Lower leg skin (tissue), 4 donors: ENCODE measurements at regions of chr12 and their contacts with region 1.

Region 1: DNA sequence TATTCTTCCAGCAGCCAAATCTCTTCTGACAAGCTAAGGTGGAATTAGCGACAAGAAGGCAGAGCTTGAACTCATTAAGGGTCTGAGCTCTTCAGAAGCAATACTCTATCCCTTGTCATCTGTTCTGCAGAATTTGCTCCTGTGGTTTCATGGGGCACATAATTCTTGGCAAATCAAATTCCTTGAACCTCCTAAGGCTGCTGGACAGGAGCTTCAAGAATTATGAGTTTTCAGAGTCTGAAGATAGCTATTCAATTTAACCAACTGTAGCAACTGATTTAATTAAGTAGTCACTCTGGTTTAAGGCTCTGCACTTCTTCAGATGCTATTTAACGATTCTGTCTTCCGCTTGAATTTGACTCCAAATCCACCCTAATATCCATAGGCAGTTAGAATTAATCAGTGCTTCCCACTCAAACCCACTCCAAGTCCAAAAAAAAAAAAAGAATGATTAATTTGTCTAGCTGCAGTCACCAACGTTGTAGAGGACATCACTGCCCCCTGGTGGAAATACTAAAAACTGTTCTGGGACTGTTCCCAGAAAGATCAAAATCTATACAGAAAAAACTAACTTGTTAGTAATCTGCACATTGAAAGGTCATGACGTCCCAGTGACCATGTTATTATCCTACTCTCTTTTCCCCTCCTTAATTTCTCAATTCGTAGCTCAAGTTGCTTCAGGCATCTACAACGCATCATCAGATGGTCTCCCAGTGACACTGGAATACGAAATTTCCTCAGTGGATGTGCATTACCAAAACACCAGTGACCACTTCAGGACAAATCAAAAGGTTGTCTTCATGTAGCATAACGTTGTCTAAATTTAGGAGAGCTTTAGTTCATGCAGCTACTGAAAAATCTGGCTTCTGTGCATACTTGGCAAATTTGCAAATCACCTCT is 169.8 kb downstream of the KIF21A start:
- DNase-seq: no peak
- H3K4me3 ChIP-seq: no peak overlapping the region
- CTCF ChIP-seq: no peak
- POLR2A ChIP-seq: no peak

Region 2: DNA sequence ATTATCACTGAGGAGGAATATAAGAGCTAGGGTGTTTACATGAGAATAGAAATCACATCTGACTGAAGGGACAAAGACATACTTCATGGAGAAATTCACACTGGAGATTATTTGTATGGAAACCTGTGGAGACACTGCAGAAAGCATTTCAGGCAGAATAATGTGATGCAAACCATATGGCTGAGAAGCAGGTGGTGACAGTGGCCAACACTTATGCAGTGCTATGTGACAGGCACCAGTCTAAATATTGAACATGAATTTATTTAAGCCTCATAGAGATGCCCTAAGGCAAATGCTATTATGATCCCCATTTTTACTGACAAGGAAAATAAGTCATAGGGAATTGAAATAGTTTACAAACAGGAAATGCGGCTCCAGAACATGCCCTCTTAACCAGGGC is 940.3 kb before region 1 on chr12:
- intact Hi-C with region 1: loop called (anchors 10 kb)
- DNase-seq: no peak
- H3K4me3 ChIP-seq: no peak overlapping the region
- CTCF ChIP-seq: no peak
- POLR2A ChIP-seq: no peak

Region 3: GRCh38 chr12:39354955-39355354 is 81.8 kb after region 1 on chr12:
- intact Hi-C with region 1: no loop called
- DNase-seq: no peak
- H3K4me3 ChIP-seq: no peak overlapping the region
- CTCF ChIP-seq: no peak
- POLR2A ChIP-seq: no peak

Region 4: DNA sequence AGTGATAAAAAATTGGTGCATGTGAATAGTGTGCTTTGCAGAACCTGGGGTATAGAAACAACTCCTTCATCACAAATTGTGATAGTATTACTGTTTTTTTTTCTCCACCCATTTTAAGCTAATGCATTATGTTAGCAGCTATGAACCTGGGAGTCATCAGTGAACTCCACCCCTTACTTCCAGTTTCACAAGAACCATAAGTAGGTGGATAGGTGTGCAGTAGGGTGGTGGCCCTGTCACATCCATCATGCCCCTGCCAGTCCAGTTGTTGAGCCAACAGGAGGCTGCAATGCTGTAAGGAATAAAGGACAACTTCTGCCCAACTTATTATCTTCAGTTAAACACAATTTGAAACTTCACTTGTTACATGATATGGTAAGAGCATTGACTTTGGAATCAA is 260.8 kb after region 1 on chr12:
- intact Hi-C with region 1: no loop called
- DNase-seq: no peak
- H3K4me3 ChIP-seq: no peak overlapping the region
- CTCF ChIP-seq: no peak
- POLR2A ChIP-seq: no peak